ENCODE measurements at regions of chr12 and their contacts with region 1.

Region 1: DNA sequence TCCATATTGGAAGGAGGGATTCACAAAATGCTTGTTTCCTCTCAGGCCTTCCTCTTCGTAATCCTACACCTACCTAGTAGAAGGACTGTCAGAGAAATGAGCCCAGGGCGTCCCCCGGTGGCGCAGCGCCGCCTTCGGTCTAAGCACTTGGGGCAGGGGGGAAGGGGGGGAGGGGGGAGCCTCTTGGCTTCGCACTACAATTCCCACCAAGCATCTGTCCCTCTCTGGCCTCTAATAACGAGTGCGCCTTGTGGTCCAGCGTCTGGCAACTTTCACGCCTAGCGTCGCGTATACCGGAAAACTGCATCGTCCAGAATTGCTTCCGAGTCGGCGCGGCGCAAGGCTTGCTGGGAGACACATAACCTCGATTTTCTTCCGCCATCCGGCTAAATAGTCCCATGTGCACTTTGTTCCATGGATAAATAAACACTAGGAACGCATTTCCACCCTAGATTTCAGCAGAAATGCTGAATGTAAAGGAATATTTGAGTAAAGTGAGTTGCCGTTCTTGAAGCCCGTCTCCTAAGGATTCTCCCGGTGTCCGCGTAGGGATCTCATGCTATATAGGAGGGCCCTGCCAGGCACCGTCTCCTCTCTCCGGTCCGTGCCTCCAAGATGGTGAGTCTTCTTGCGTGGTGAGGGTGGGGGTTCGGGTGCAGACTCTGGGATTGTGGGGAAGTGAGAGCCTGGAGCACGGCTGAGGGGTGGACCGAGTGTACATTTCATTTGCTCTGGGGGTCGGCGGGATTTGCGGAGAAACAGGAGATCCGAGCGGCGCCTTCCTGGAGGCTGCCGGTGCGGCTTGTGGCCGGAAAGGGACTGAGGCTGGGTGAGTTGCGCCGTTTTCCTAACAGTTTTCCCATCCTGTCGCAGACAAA is at the start of gene RPS26:
- DNase-seq: peak; percentile 100
- ATAC-seq: peak; percentile 88
- H3K4me3 ChIP-seq: peak within 1 kb of the TSS; percentile 93
- H3K27ac ChIP-seq: peak within 1 kb of the TSS; percentile 90
- H3K4me1 ChIP-seq: no peaks in the 10 kb centered on the region; the same call in 1 of the 2 replicates
- H3K27me3 ChIP-seq: no peaks in the 10 kb centered on the region
- CTCF ChIP-seq: peak; percentile 53
- POLR2A ChIP-seq: peak; percentile 99
- RAD21 ChIP-seq: peak; percentile 65
- total RNA-seq, gene RPS26: 307 and 977 TPM in 2 replicates

Region 2: GRCh38 chr12:55973598-55974307 is 68.0 kb before region 1 on chr12 and contains the start of gene RAB5B:
- CTCF ChIA-PET with region 1: no interaction called
- POLR2A ChIA-PET with region 1: interaction called, 13 read pairs
- dilution Hi-C with region 1: no loop called
- in situ Hi-C with region 1: no loop called
- intact Hi-C with region 1: no loop called
- DNase-seq: peak; percentile 100
- ATAC-seq: peak; percentile 89
- H3K4me3 ChIP-seq: peak within 1 kb of the TSS; percentile 70
- H3K27ac ChIP-seq: peak within 1 kb of the TSS; percentile 64
- H3K4me1 ChIP-seq: peaks cover 5% of the 10 kb centered on the region
- H3K27me3 ChIP-seq: no peaks in the 10 kb centered on the region
- CTCF ChIP-seq: no peak
- POLR2A ChIP-seq: peak; percentile 93
- RAD21 ChIP-seq: no peak
- total RNA-seq, gene RAB5B: 54.4 and 56.5 TPM in 2 replicates

Region 3: GRCh38 chr12:55996715-55997534 is 44.9 kb before region 1 on chr12 and contains the start of gene SUOX:
- CTCF ChIA-PET with region 1: interaction called, 3 read pairs
- POLR2A ChIA-PET with region 1: no interaction called
- dilution Hi-C with region 1: no loop called
- in situ Hi-C with region 1: loop called (anchors 5 kb)
- intact Hi-C with region 1: loop called (anchors 1 kb)
- DNase-seq: peak; percentile 96
- ATAC-seq: peak; percentile 99
- H3K4me3 ChIP-seq: peak within 1 kb of the TSS; percentile 68
- H3K27ac ChIP-seq: peak within 1 kb of the TSS; percentile 66
- H3K4me1 ChIP-seq: peaks cover 4% of the 10 kb centered on the region
- H3K27me3 ChIP-seq: no peaks in the 10 kb centered on the region
- CTCF ChIP-seq: no peak
- POLR2A ChIP-seq: no peak; the same call in 1 of the 2 replicates
- RAD21 ChIP-seq: no peak; the same call in 1 of the 2 replicates
- total RNA-seq, gene SUOX: 13.1 and 19.4 TPM in 2 replicates

Region 4: DNA sequence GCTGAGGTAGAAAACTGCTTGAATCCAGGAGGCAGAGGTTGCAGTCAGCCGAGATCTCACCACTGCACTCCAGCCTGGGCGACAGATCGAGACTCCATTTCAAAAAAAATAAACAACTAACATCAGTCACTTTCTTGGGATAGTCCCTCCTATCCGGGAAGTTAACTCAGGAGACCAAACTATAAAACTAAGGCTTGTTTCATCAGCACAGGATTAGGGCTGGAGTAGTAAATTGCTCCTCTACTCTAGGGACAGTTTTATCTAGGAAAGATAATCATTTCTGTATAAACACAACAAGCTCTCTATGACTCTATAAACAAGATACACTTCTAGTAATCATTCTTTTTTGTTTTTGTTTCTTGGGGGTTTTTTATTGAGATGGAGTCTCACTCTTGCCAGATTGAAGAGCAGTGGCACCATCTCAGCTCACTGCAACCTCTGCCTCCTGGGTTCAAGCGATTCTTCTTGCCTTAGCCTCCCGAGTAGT is 11.7 kb after region 1 on chr12:
- CTCF ChIA-PET with region 1: no interaction called
- POLR2A ChIA-PET with region 1: interaction called, 13 read pairs
- dilution Hi-C with region 1: no loop called
- in situ Hi-C with region 1: no loop called
- intact Hi-C with region 1: no loop called
- DNase-seq: no peak
- ATAC-seq: peak; percentile 71
- H3K4me3 ChIP-seq: no peak overlapping the region
- H3K27ac ChIP-seq: no peak overlapping the region
- H3K4me1 ChIP-seq: peaks cover 2% of the 10 kb centered on the region; the same call in 1 of the 2 replicates
- H3K27me3 ChIP-seq: no peaks in the 10 kb centered on the region
- CTCF ChIP-seq: no peak
- POLR2A ChIP-seq: no peak
- RAD21 ChIP-seq: no peak

Region 5: GRCh38 chr12:56078990-56079664 is 37.3 kb after region 1 on chr12:
- CTCF ChIA-PET with region 1: interaction called, 4 read pairs
- POLR2A ChIA-PET with region 1: no interaction called
- dilution Hi-C with region 1: no loop called
- in situ Hi-C with region 1: no loop called
- intact Hi-C with region 1: loop called (anchors 2 kb)
- DNase-seq: peak; percentile 74
- ATAC-seq: peak; percentile 90
- H3K4me3 ChIP-seq: peak overlapping the region; percentile 67
- H3K27ac ChIP-seq: peak overlapping the region; percentile 47; the same call in 1 of the 2 replicates
- H3K4me1 ChIP-seq: peaks cover 4% of the 10 kb centered on the region; the same call in 1 of the 2 replicates
- H3K27me3 ChIP-seq: peaks cover 38% of the 10 kb centered on the region
- CTCF ChIP-seq: peak; percentile 69
- POLR2A ChIP-seq: no peak
- RAD21 ChIP-seq: peak; percentile 53